ENCODE measurements at regions of chr3 and their contacts with region 1.

Region 1: GRCh38 chr3:14431892-14432834 is 29.8 kb downstream of the SLC6A6 start:
- DNase-seq: peak; percentile 92
- H3K4me3 Mint-ChIP-seq: peak overlapping the region; percentile 76
- H3K27ac Mint-ChIP-seq: peak overlapping the region; percentile 97
- H3K4me1 Mint-ChIP-seq: peaks cover 85% of the 10 kb centered on the region
- H3K27me3 Mint-ChIP-seq: no peaks in the 10 kb centered on the region

Region 2: DNA sequence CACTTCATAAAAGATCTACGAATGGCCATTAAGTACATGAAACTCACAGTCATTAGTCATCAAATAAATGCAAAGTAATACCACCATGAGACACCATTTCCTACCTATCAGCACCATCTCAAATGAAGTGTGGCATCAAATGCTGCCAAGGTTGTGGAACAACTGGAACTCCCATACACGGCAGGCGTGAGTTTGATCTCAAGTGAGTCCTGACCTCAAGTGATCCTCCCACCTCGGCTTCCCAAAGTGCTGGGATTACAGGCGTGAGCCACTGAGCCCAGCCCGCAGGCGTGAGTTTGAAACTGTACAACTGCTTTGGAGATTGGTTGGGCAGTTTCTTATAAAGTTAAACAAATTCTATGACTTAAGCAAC is 980.9 kb before region 1 on chr3:
- intact Hi-C with region 1: no loop called
- DNase-seq: no peak
- H3K4me3 Mint-ChIP-seq: peak overlapping the region; percentile 91
- H3K27ac Mint-ChIP-seq: peak overlapping the region; percentile 91
- H3K4me1 Mint-ChIP-seq: peaks cover 17% of the 10 kb centered on the region
- H3K27me3 Mint-ChIP-seq: no peaks in the 10 kb centered on the region

Region 3: DNA sequence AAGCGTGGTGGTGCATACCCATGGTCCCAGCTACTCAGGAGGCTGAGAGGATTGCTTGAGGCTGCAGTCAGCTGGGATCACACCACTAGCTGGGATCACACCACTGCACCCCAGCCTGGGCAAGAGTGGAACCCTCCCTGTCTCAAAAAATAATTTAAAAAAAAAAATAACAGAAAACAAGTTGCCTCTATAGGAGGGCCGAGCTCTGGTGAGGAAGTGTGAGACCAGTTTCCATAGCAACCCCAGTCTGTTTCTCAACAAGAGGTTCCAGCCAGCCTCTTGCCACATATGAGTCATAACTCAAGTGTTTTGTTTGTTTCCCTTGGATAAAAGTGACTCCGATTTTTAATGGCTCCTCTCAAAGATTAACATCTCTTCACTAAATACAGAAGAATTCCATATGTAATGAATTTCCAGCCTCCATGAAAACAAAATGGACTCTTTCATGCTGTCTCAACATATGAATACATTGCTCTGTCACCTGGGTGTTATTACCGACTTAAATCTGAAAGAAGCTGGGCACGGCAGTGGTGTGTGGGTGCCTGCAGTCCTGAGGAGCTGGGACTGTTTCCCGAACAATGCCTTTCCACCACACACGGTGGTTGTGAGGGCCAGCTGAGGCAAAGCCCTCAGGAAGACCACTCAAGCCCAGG is 287.6 kb before region 1 on chr3:
- intact Hi-C with region 1: loop called (anchors 1 kb)
- DNase-seq: peak; percentile 75
- H3K4me3 Mint-ChIP-seq: peak overlapping the region; percentile 64
- H3K27ac Mint-ChIP-seq: peak overlapping the region; percentile 93
- H3K4me1 Mint-ChIP-seq: peaks cover 59% of the 10 kb centered on the region
- H3K27me3 Mint-ChIP-seq: no peaks in the 10 kb centered on the region

Region 4: GRCh38 chr3:14410503-14411165 is 21.5 kb before region 1 on chr3:
- intact Hi-C with region 1: loop called (anchors 1 kb)
- DNase-seq: peak; percentile 31
- H3K4me3 Mint-ChIP-seq: peak overlapping the region; percentile 53
- H3K27ac Mint-ChIP-seq: peak overlapping the region; percentile 86
- H3K4me1 Mint-ChIP-seq: peaks cover 38% of the 10 kb centered on the region
- H3K27me3 Mint-ChIP-seq: no peaks in the 10 kb centered on the region

Region 5: DNA sequence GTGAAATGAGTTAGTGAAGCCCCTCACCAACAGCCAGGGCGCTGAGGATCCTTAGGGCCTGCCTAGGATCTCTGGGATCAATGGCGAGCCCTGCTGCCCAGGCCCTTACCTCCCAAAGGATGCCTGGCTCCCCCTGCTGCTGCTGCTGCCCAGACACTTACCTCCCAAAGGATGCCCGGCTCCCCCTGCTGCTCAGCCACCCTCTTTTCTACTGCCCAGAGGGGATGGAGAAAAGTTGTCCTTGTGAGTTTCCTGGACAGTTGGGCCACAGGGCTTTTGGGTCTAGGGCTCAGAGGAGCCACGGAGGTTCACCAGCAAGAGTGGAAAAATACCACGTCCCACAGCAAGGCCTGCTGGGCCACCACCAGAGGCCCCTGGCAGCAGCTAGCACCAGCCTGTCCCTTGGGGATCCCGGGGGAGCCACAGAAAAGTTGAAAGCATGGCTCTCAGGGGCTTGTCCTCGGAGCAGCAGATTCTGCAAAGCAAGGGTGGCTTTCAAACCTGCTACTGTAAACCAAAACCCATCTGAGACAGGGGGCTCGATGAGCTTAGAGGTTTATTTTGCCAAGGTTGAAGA is 29.7 kb after region 1 on chr3:
- intact Hi-C with region 1: loop called (anchors 1 kb)
- DNase-seq: no peak
- H3K4me3 Mint-ChIP-seq: no peak overlapping the region
- H3K27ac Mint-ChIP-seq: no peak overlapping the region
- H3K4me1 Mint-ChIP-seq: peaks cover 28% of the 10 kb centered on the region
- H3K27me3 Mint-ChIP-seq: no peaks in the 10 kb centered on the region